Activated CD4-positive, alpha-beta T cell treated with anti-CD3 and anti-CD28 coated beads for 36 hours (primary cell): ENCODE measurements at regions of chr15 and their contacts with region 1.

Region 1: DNA sequence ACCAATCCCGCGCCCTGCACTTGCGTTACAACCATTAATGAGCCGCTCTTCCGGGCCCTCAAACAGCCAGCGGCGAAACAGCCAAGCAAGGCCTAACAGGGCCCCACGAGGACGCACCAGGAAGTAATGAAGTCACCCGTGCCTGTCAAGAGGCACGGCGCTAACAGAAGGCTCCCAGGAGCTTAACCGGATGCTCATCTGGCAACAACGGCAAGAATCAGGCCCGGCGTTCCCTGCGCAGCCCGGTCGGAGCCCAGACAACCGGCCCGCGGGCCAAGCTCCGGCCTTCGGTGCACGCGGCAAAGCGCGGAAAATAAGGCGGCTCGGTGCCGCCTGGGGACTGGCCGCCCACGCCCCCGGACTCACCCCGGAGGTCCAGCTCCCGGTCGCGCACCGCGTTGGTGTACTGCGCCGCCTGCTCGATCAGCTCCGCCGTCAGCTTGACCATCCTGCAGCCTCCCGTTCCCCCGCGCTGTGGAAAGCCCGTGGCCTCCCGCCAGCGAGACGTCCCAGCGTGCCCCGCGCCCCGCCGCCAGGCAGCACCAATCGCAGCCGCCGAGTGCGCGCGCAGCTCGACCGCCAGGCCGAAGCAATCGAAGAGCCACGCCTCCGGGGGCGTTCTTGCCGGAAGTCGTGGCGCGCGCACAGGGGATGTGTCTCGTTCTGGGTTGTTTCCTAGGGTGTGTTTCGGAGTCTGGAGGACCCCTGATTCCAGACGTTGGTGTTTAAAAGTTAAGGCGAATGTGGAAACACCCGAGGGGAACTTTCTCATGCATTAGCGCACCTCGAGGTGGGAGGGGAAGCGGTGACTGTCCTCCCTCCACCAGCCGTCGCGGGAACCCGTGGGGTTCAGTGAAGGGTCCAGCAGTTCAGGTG is at the start of gene SNRPA1:
- DNase-seq: peak; percentile 99
- ATAC-seq: peak; percentile 84
- H3K4me3 Mint-ChIP-seq: peak within 1 kb of the TSS; percentile 79
- H3K27ac Mint-ChIP-seq: peak within 1 kb of the TSS; percentile 94
- H3K4me1 Mint-ChIP-seq: peaks cover 33% of the 10 kb centered on the region
- H3K27me3 Mint-ChIP-seq: no peaks in the 10 kb centered on the region
- total RNA-seq, gene SNRPA1: 167 to 185 TPM

Region 2: DNA sequence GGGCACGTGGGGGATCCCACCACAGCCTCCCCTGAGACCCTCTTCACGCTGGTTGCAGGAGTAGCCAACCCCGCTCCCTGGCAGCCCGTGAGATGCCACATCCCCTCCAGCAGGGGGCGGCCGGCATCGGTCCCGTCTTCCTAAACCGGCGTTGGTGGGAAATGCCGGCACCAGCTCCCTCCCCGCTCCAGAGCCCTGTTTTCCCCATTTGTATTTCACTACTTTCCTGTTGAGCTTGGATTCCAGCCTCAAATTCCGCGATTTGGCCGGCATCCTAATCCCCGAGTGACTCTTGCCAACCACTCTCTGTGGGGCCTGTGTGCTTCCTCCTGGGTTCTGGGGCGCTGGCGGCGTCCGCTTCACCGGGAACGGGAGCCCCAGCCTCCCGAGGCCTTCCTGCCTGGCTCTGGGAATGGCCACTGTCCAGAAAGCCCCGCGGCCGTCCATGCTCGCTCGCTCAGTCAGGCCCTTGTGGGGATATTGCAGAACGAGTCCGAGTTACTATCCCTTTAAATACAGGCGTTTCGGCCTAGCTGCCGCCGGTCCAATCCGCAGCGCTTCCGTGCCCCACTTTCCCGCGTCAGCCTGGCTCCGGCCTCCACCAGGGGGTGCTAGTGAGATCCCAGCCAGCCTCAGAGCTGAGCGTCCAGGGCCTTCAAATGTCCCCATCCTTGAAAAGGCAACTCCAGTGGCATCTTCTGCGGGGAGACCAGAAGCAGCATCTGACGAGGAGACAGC is 945.1 kb before region 1 on chr15:
- CTCF ChIA-PET with region 1: no interaction called
- POLR2A ChIA-PET with region 1: no interaction called
- intact Hi-C with region 1: loop called in 1 of 2 experiments (anchors 10 kb)
- DNase-seq: peak; percentile 93
- ATAC-seq: peak; percentile 95
- H3K4me3 Mint-ChIP-seq: peak overlapping the region; percentile 78
- H3K27ac Mint-ChIP-seq: peak overlapping the region; percentile 77
- H3K4me1 Mint-ChIP-seq: peaks cover 7% of the 10 kb centered on the region
- H3K27me3 Mint-ChIP-seq: peaks cover 7% of the 10 kb centered on the region

Region 3: DNA sequence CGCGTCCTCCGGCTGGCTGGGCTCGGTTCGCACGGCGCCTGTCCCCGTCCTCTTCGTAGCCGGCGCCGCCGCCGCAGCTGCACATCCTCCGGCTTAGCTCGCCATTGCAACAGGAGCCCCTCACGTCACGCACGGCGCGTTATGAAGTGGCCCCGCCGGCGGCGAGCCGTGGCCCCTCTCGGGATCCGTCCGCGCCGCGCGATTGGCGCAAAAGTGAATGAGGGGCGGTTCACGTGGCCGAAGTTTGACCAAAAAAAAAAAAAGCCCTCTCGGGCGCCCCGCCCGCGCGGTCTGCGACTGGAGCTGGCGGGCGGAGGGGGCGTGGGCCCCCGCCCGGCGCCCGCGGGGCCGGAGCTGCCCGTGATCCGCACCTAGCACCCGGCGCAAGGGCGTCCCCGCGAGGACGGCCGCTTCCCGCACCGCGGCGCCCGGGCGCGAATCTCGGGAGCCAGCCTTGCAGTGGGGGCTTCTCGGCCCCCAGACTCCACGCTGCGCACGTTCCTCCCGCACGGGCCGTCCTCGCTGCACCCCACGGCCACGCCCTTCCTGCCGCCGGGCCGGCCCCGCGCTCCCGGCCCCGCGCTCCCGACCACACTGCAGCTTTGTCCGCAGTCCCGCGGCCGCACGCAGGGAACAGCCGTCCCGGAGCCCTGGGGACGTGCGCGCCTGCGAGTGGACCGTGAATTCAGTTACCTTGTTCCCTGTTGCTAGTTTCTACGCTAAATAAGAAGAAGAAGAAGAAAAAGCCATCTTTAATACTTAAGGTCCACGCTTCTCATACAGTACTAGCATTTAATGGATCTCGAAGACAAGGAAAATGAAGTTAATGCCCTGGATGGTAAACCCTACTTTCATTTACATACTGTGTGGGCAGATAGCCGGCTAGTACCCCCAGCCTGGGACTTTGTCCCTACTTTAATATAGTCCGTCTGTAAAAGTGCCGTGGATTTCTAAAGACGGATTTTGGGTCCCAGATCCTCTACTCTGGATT is 42.8 kb before region 1 on chr15 and contains the start of gene CHSY1:
- CTCF ChIA-PET with region 1: interaction called, 4 read pairs
- POLR2A ChIA-PET with region 1: no interaction called
- intact Hi-C with region 1: loop called in 1 of 2 experiments (anchors 1 kb)
- DNase-seq: peak; percentile 91
- ATAC-seq: peak; percentile 61
- H3K4me3 Mint-ChIP-seq: peak within 1 kb of the TSS; percentile 85
- H3K27ac Mint-ChIP-seq: peak within 1 kb of the TSS; percentile 87
- H3K4me1 Mint-ChIP-seq: peaks cover 58% of the 10 kb centered on the region
- H3K27me3 Mint-ChIP-seq: no peaks in the 10 kb centered on the region
- total RNA-seq, gene CHSY1: 31.5 to 36.1 TPM

Region 4: GRCh38 chr15:101333401-101333800 is 38.4 kb after region 1 on chr15:
- CTCF ChIA-PET with region 1: interaction called, 6 read pairs
- POLR2A ChIA-PET with region 1: no interaction called
- intact Hi-C with region 1: loop called (anchors 1 kb)
- DNase-seq: no peak
- ATAC-seq: no peak
- H3K4me3 Mint-ChIP-seq: no peak overlapping the region
- H3K27ac Mint-ChIP-seq: peak overlapping the region; percentile 75
- H3K4me1 Mint-ChIP-seq: peaks cover 14% of the 10 kb centered on the region
- H3K27me3 Mint-ChIP-seq: no peaks in the 10 kb centered on the region

Region 5: GRCh38 chr15:101641166-101641764 is 346.3 kb after region 1 on chr15:
- CTCF ChIA-PET with region 1: interaction called, 46 read pairs
- POLR2A ChIA-PET with region 1: no interaction called
- intact Hi-C with region 1: loop called (anchors 1 kb)
- DNase-seq: peak; percentile 85
- ATAC-seq: peak; percentile 60
- H3K4me3 Mint-ChIP-seq: no peak overlapping the region
- H3K27ac Mint-ChIP-seq: peak overlapping the region; percentile 78
- H3K4me1 Mint-ChIP-seq: peaks cover 33% of the 10 kb centered on the region
- H3K27me3 Mint-ChIP-seq: no peaks in the 10 kb centered on the region

Region 6: DNA sequence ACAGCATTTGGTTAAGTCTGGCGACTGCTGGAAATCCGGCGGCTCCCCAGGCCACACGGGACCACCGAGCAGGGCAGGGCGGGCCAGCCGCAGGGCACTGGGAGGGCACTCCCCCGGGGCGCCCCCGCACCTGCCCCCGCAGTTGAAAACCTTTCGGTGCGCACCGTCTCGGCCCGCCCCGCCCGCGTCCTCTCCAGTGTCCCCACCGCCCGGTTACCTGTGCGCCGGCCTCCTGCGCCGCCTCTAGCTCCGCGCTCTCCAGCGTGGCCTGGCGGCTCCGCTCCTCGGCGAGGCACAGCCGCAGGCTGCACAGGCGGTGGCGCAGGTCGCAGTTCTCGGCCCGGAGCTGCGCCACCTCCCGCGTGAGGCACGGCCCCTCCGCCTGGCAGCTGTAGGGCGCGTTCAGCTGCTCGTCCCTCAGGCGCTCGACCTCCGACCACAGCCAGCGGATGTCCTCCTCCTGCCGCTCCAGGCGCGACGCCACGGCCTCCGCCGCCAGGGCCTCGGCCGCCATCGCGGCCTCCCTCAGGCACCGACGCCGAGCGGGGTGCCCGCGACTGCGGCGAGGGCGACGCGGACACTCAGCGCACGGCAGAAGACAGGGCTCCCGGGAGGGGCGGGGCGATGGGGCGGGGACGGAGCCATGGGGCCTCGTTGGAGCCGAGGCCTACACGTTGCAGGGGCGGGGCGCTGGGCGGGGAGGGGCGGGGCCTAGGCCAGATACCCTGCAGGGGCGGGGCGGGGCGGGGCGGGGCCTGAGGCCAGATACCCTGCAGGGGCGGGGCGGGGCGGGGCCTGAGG is 429.1 kb after region 1 on chr15 and contains the start of gene TARS3:
- CTCF ChIA-PET with region 1: no interaction called
- POLR2A ChIA-PET with region 1: interaction called, 4 read pairs
- intact Hi-C with region 1: loop called (anchors 1 to 10 kb)
- DNase-seq: peak; percentile 98
- ATAC-seq: peak; percentile 93
- H3K4me3 Mint-ChIP-seq: peak within 1 kb of the TSS; percentile 78
- H3K27ac Mint-ChIP-seq: peak within 1 kb of the TSS; percentile 86
- H3K4me1 Mint-ChIP-seq: peaks cover 17% of the 10 kb centered on the region
- H3K27me3 Mint-ChIP-seq: no peaks in the 10 kb centered on the region
- total RNA-seq, gene TARS3: 9.3 to 10.3 TPM